G401 (cell line): ENCODE measurements at regions of chr2 and their contacts with region 1.

Region 1: GRCh38 chr2:60954139-60954538 is 63.4 kb upstream of the PEX13 start:
- DNase-seq: no peak

Region 2: GRCh38 chr2:60861736-60862135 is 92.4 kb before region 1 on chr2:
- in situ Hi-C with region 1: loop called (anchors 5 kb)
- DNase-seq: no peak

Region 3: DNA sequence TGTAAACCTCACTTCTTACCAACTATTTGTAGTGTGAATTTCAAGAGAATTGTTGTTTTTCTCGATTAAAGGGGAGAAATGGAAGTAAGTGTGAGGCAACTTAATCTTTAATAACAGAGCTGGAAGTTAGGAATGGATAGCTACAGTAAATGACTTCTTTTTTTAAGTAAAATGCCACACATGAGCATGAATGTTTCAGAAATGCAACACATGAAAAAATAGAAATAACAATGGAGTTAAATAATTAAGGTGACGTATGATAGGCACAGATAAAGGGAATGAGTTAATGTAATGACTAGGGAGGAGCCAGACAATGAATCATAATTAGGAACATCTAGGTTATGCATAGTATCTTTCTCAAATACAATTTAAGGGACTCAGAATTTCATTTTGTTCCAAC is 69.3 kb before region 1 on chr2:
- in situ Hi-C with region 1: no loop called
- DNase-seq: no peak

Region 4: GRCh38 chr2:60998628-60999545 is 44.7 kb after region 1 on chr2:
- in situ Hi-C with region 1: no loop called
- DNase-seq: peak; percentile 75